Astrocyte of the cerebellum (primary cell): ENCODE measurements at regions of chr13 and their contacts with region 1.

Region 1: GRCh38 chr13:37561031-37561430 is 37.5 kb downstream of the POSTN start:
- DNase-seq: no peak
- H3K4me3 ChIP-seq: no peak overlapping the region
- CTCF ChIP-seq: no peak

Region 2: DNA sequence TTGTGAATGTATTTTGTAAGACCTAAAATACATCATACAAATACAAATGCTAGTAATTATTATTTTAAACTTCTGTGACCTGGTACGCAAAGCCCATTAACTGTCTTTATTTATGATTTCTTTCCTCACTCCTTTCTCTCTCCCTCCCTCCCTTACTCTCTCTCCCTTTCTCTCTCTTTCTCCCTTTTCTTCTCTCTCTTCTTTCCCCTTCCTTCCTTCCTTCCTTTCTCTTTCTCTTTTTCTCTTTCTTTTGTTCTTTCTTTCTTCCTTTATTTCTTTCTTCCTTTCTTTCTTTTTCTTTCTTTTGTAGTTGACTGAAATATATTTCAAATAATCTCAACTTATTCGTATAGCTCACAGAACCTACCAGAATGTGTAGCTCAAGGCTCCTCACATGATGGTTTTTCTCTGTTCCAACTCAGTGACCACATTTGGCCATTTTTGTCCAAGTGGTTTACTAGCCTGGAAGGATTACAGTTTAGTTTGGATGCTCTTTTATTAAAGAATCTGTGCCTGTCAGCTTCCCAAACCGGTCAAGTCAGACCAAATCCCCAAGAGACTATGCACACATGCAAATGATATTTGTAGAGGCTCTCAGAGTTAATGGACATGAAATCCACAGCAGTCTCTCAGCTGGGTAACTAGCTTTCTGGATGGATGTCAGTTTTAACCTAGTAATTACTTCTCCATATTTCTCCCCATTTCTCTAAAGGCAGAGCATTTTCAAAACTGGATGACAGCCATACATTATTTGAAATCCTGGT is 34.1 kb before region 1 on chr13:
- in situ Hi-C with region 1: loop called (anchors 5 kb)
- DNase-seq: peak; percentile 93
- H3K4me3 ChIP-seq: no peak overlapping the region
- CTCF ChIP-seq: no peak

Region 3: GRCh38 chr13:37602747-37603381 is 41.8 kb after region 1 on chr13:
- in situ Hi-C with region 1: no loop called
- DNase-seq: peak; percentile 18
- H3K4me3 ChIP-seq: no peak overlapping the region
- CTCF ChIP-seq: peak; percentile 14